ENCODE measurements at regions of chr15 and their contacts with region 1.

Region 1: GRCh38 chr15:33722005-33722672 is 246.2 kb upstream of the CHRM5 start:
- DNase-seq: no peak
- H3K4me3 ChIP-seq: no peak overlapping the region
- H3K4me3 Mint-ChIP-seq: no peak overlapping the region
- H3K27ac ChIP-seq: no peak overlapping the region
- H3K27ac Mint-ChIP-seq: peak overlapping the region in 1 of 7 donors; percentile 13
- H3K4me1 ChIP-seq: no peaks in the 10 kb centered on the region
- H3K4me1 Mint-ChIP-seq: no peaks in the 10 kb centered on the region
- H3K27me3 ChIP-seq: no peaks in the 10 kb centered on the region
- H3K27me3 Mint-ChIP-seq: peaks cover 1 to 8% of the 10 kb centered on the region in 2 donors

Region 2: GRCh38 chr15:33194237-33194636 is 527.9 kb before region 1 on chr15:
- CTCF ChIA-PET with region 1: no interaction called
- POLR2A ChIA-PET with region 1: no interaction called
- intact Hi-C with region 1: no loop called
- DNase-seq: no peak
- H3K4me3 ChIP-seq: peak overlapping the region; percentile 36 to 58
- H3K4me3 Mint-ChIP-seq: peak overlapping the region; percentile 77 to 90 (median 86)
- H3K27ac ChIP-seq: no peak overlapping the region
- H3K27ac Mint-ChIP-seq: peak overlapping the region in 4 of 7 donors; percentile 69 to 96 (median 82)
- H3K4me1 ChIP-seq: peaks cover 7% of the 10 kb centered on the region
- H3K4me1 Mint-ChIP-seq: peaks cover 8 to 16% (median 12%) of the 10 kb centered on the region in 4 donors
- H3K27me3 ChIP-seq: no peaks in the 10 kb centered on the region
- H3K27me3 Mint-ChIP-seq: peaks cover 7 to 11% of the 10 kb centered on the region in 2 donors

Region 3: DNA sequence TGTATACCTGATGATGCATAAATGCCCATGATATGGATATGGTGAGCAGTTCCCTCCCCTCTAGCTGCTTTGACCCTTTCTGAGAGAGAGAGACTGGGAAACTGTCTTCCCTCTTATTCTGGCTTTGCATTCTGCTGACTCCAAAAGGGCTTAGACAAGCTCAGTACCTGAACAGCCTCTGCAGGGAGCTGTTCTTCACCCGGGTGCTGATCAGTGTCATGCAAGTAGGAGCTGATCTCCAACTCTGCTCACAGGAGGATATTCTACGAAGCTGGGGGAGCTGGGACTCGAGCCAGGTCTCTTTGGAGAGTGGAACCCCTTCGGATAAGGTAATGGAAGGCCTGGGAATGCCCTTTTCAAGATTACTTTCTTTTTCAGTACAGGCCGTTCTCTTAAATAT is 174.3 kb before region 1 on chr15:
- CTCF ChIA-PET with region 1: no interaction called
- POLR2A ChIA-PET with region 1: no interaction called
- intact Hi-C with region 1: no loop called
- DNase-seq: no peak
- H3K4me3 ChIP-seq: no peak overlapping the region
- H3K4me3 Mint-ChIP-seq: no peak overlapping the region
- H3K27ac ChIP-seq: no peak overlapping the region
- H3K27ac Mint-ChIP-seq: no peak overlapping the region
- H3K4me1 ChIP-seq: no peaks in the 10 kb centered on the region
- H3K4me1 Mint-ChIP-seq: no peaks in the 10 kb centered on the region
- H3K27me3 ChIP-seq: no peaks in the 10 kb centered on the region
- H3K27me3 Mint-ChIP-seq: peaks cover 0 to 1% of the 10 kb centered on the region in 2 donors

Region 4: GRCh38 chr15:33737687-33738601 is 15.8 kb after region 1 on chr15:
- CTCF ChIA-PET with region 1: interaction called, 15 read pairs
- POLR2A ChIA-PET with region 1: no interaction called
- intact Hi-C with region 1: no loop called
- DNase-seq: peak in 3 of 5 donors; percentile 2 to 12 (median 11)
- H3K4me3 ChIP-seq: no peak overlapping the region
- H3K4me3 Mint-ChIP-seq: no peak overlapping the region
- H3K27ac ChIP-seq: no peak overlapping the region
- H3K27ac Mint-ChIP-seq: no peak overlapping the region
- H3K4me1 ChIP-seq: no peaks in the 10 kb centered on the region
- H3K4me1 Mint-ChIP-seq: peaks cover 0 to 5% (median 1%) of the 10 kb centered on the region in 4 donors
- H3K27me3 ChIP-seq: no peaks in the 10 kb centered on the region
- H3K27me3 Mint-ChIP-seq: peaks cover 2 to 3% of the 10 kb centered on the region in 2 donors

Measured in CD4-positive, alpha-beta memory T cell (primary cell).